Heart left ventricle (tissue), 16 donors: ENCODE measurements at regions of chr9 and their contacts with region 1.

Region 1: DNA sequence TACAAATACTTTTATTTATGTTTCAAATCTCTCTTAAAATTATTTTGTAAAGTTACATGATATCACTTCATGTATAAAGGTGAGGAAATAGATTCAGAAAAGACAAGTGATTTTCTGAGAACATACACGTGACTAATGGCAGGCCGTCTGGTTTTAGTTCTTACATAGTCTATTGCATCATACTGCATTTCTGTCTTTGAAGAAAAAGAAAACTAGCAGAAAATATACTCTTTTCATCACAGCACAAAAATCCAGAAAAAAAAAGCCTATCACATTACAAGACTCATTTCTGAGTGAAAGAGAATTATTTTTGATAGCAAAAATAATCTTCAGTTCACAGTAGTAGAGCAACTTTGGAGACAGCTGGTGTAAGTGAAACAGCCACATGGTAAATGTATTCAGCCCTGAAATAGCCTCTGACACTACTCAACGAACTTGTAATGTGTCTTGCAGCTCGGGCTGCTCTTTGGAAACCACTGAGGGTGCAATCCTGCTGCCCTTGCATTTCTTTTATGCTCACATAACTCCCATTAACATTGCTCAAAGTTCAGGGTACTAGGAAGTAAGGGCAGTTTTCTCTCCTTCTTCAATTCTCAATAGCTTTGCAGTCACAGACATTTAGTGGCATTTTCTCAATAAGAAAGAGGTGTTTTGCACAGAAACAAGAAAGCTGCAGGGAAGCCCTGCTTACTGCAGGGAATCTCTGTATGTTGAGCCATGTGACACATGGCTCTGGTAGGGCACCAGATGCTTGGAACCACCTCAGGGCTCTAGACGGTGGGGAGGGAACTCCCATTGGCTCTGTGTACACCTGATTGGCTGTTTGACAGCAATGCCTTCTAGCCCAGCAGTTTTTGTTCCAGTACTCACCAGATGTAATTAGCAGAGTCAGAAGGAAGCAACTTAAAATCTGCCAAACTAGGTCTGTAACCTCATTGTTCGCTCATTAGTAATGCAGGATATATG is 845.3 kb upstream of the PTPRD start:
- DNase-seq: no peak
- ATAC-seq: peak in 1 of 4 donors; percentile 50
- H3K4me3 ChIP-seq: no peak overlapping the region
- H3K27ac ChIP-seq: no peak overlapping the region
- H3K4me1 ChIP-seq: no peaks in the 10 kb centered on the region
- H3K27me3 ChIP-seq: no peaks in the 10 kb centered on the region
- CTCF ChIP-seq: no peak
- POLR2A ChIP-seq: no peak

Region 2: DNA sequence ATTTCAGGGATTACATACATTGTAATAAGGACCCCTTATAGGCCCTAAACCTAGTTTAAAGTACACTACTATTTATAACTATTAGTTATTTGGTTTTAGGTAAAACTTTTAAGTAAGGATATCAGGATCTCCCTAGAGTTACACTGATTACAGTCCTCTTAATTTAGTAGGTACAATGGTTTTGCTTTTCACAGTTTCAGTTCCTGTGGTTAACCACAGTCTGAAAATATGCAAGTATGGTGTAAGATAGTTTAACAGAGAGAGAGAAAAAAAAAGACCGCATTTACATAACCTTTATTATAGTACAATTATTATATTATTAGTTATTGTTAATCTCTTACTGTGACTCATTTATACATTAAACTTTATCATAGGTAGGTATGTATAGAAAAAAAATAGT is 120.0 kb before region 1 on chr9:
- intact Hi-C with region 1: no loop called
- DNase-seq: no peak
- ATAC-seq: no peak
- H3K4me3 ChIP-seq: no peak overlapping the region
- H3K27ac ChIP-seq: no peak overlapping the region
- H3K4me1 ChIP-seq: no peaks in the 10 kb centered on the region
- H3K27me3 ChIP-seq: no peaks in the 10 kb centered on the region
- CTCF ChIP-seq: no peak
- POLR2A ChIP-seq: no peak

Region 3: GRCh38 chr9:11506980-11507379 is 48.9 kb after region 1 on chr9:
- intact Hi-C with region 1: loop called in 1 of 10 experiments (anchors 10 kb)
- DNase-seq: no peak
- ATAC-seq: no peak
- H3K4me3 ChIP-seq: no peak overlapping the region
- H3K27ac ChIP-seq: no peak overlapping the region
- H3K4me1 ChIP-seq: no peaks in the 10 kb centered on the region
- H3K27me3 ChIP-seq: no peaks in the 10 kb centered on the region
- CTCF ChIP-seq: no peak
- POLR2A ChIP-seq: no peak